BJ (cell line): ENCODE measurements at regions of chr15 and their contacts with region 1.

Region 1: GRCh38 chr15:33132722-33133345 is 61.7 kb downstream of the FMN1 start:
- DNase-seq: no peak
- H3K4me3 ChIP-seq: no peak overlapping the region
- H3K27me3 ChIP-seq: no peaks in the 10 kb centered on the region
- CTCF ChIP-seq: peak; percentile 80

Region 2: DNA sequence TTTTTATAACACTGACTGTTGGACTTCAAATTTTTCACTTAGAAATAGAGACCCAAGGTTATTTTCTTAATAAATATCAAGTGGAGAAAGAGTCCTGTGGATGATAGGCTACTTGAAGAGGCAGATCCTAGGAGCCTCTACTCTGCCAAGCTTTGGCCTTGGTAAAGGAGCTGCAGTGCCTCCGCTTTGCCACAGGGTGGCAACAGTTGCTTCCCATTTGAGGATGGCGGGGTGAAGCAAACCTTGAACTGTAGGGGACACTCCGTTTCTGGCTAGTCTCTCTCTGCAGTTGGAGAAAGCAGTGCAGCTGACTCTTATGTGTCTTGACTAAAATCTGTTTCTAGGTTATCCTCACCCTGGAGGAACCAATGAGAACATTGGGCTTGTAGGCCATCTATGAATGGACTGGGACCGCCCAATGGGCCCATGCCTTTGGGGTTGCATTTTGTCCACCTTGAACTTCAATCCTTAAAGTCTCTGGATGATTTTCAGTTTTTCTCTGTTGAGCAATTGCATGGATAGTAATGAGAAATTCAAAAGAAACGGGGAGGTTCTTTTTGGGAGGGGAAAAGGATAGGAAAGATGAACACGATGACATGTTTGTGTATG is 481.5 kb before region 1 on chr15:
- CTCF ChIA-PET with region 1: interaction called, 22 read pairs
- POLR2A ChIA-PET with region 1: no interaction called
- DNase-seq: no peak
- H3K4me3 ChIP-seq: no peak overlapping the region
- H3K27me3 ChIP-seq: no peaks in the 10 kb centered on the region; the same call in 1 of the 2 replicates
- CTCF ChIP-seq: peak; percentile 98

Region 3: GRCh38 chr15:33013827-33014445 is 118.9 kb before region 1 on chr15:
- CTCF ChIA-PET with region 1: interaction called, 15 read pairs
- POLR2A ChIA-PET with region 1: no interaction called
- DNase-seq: peak; percentile 32
- H3K4me3 ChIP-seq: no peak overlapping the region
- H3K27me3 ChIP-seq: no peaks in the 10 kb centered on the region
- CTCF ChIP-seq: no peak

Region 4: GRCh38 chr15:33031324-33031821 is 101.5 kb before region 1 on chr15:
- CTCF ChIA-PET with region 1: interaction called, 16 read pairs
- POLR2A ChIA-PET with region 1: no interaction called
- DNase-seq: peak; percentile 51
- H3K4me3 ChIP-seq: no peak overlapping the region
- H3K27me3 ChIP-seq: no peaks in the 10 kb centered on the region
- CTCF ChIP-seq: no peak

Region 5: GRCh38 chr15:33086507-33087121 is 46.2 kb before region 1 on chr15:
- CTCF ChIA-PET with region 1: interaction called, 289 read pairs
- POLR2A ChIA-PET with region 1: no interaction called
- DNase-seq: peak; percentile 30
- H3K4me3 ChIP-seq: no peak overlapping the region
- H3K27me3 ChIP-seq: no peaks in the 10 kb centered on the region
- CTCF ChIP-seq: peak; percentile 67

Region 6: DNA sequence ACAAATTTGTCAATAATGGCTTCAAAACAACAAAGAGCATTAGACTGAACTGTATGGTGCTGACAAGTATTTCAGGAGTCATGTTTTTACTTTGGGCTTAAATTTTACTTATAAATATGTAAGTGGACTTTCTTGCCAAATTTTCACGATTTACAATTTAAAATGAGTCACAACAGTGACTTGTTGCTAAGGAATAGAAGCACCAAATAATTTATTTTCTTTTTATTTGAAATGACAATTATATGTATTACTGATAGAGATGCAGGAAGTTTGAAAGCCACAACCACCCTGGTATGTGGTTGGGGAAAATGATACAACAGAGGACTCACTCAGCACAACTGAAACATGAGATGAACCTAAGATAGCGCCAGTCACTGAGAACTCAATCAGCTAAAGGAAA is 28.6 kb before region 1 on chr15:
- CTCF ChIA-PET with region 1: interaction called, 22 read pairs
- POLR2A ChIA-PET with region 1: no interaction called
- DNase-seq: peak; percentile 74
- H3K4me3 ChIP-seq: no peak overlapping the region
- H3K27me3 ChIP-seq: no peaks in the 10 kb centered on the region
- CTCF ChIP-seq: no peak

Region 7: DNA sequence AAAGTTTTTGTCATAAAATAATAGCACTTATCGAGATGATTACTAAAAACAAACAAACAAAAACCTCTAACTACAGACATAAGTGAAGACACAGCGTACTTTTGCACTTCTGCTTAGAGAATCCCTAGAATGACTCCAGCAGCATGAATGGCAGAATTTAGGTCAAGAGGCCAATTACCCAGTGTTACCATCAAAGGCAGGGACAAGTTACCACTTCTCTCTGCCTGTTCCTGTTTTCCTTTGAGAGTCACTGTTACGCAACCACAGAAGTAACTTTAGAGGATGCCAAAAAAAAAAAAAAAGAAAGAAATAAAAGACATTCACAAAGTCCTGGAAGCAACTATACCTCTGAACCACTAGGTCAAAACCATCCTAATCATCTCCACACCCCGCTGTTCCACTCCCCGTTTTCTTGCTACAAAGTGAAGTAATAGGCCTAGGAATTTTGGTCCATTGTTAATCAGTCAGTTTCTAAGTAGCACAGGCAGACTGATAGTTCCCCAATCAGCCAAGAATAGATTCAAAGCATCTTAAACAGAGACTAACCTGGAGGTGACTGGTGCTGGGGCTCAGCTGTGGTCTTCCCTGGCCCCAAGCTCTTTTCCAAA is 19.8 kb after region 1 on chr15:
- CTCF ChIA-PET with region 1: interaction called, 25 read pairs
- POLR2A ChIA-PET with region 1: no interaction called
- DNase-seq: no peak
- H3K4me3 ChIP-seq: no peak overlapping the region
- H3K27me3 ChIP-seq: peaks cover 2% of the 10 kb centered on the region
- CTCF ChIP-seq: no peak

Region 8: GRCh38 chr15:33215941-33216872 is 83.4 kb after region 1 on chr15:
- CTCF ChIA-PET with region 1: no interaction called
- POLR2A ChIA-PET with region 1: no interaction called
- DNase-seq: no peak
- H3K4me3 ChIP-seq: no peak overlapping the region
- H3K27me3 ChIP-seq: no peaks in the 10 kb centered on the region; the same call in 1 of the 2 replicates
- CTCF ChIP-seq: peak; percentile 57

Region 9: DNA sequence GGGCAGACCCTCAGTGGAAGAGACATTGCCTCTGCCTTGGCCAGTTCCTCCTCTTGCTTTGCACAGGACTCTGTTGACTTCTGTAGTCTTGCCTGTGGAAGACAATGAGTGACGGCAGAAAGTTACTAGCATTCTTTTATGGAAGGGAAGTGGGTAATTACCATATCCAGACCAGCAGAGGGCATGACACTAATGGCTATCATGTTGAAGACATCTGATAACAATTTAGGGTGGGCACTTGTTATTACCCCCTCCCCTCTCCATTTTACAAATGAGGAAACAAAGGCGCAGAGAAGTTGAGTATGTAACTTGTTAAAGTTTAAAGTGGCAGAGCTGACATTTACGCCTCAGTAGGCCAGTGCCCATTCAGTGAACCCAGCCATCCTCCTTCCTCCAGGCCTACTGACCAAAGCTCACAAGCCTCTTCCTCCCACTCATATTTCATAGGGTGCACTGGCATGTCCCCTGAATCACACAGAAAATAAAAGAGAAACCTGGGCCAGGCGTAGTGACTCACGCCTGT is 109.9 kb after region 1 on chr15:
- CTCF ChIA-PET with region 1: no interaction called
- POLR2A ChIA-PET with region 1: no interaction called
- DNase-seq: no peak
- H3K4me3 ChIP-seq: no peak overlapping the region
- H3K27me3 ChIP-seq: no peaks in the 10 kb centered on the region
- CTCF ChIP-seq: peak; percentile 49